Activated CD4-positive, alpha-beta memory T cell treated with anti-CD3 and anti-CD28 coated beads, Interleukin-2, amount 10 ng/mL, durations not matched to agents 7 days and 5 days (primary cell): ENCODE measurements at regions of chr2 and their contacts with region 1.

Region 1: GRCh38 chr2:203909261-203909967 is 27.1 kb upstream of the ICOS start:
- DNase-seq: no peak
- H3K4me3 Mint-ChIP-seq: peak overlapping the region; percentile 38
- H3K27ac Mint-ChIP-seq: peak overlapping the region; percentile 69
- H3K4me1 Mint-ChIP-seq: peaks cover 33% of the 10 kb centered on the region
- H3K27me3 Mint-ChIP-seq: peaks cover 3% of the 10 kb centered on the region

Region 2: DNA sequence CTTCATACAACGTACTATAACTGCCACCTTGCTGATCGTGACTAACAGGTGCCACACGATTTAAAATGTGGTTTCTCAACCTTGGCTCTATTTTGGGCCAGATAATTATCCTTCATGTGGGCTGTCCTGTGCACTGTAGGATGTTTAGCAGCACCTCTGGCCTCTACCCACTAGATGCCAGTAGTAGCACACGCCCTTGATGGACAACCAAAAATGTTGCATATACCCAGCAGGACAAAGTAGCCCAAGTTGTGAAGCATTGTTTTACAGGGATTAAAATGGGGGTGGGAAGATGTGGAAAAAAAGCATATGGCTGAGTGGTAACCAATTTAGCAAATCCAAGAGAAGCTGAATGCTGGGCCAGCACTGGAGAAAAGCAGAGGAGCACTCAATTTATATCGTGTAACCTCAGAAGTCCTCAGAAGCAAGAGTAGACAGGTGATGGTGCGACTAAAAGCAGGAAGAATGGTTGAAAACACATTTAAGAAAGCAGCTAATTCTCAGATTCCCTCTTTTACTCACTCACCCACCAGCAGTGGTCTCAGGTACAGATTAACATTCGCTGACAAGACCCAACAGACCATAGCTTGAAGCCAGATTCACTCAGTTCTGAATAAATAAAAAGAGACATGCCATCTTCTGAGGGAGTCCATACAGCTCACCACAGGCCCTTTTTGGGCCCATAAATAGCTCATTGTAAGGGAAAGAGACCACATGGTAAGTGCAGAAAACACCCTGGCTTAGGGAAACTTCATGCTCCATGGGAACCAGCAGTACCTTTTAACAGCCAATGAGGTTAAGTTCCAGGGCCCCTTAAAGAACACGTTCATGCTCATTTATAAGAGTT is 424.9 kb before region 1 on chr2:
- CTCF ChIA-PET with region 1: interaction called, 16 read pairs
- POLR2A ChIA-PET with region 1: interaction called, 5 read pairs
- DNase-seq: peak; percentile 62
- H3K4me3 Mint-ChIP-seq: no peak overlapping the region
- H3K27ac Mint-ChIP-seq: no peak overlapping the region
- H3K4me1 Mint-ChIP-seq: peaks cover 6% of the 10 kb centered on the region
- H3K27me3 Mint-ChIP-seq: no peaks in the 10 kb centered on the region

Region 3: DNA sequence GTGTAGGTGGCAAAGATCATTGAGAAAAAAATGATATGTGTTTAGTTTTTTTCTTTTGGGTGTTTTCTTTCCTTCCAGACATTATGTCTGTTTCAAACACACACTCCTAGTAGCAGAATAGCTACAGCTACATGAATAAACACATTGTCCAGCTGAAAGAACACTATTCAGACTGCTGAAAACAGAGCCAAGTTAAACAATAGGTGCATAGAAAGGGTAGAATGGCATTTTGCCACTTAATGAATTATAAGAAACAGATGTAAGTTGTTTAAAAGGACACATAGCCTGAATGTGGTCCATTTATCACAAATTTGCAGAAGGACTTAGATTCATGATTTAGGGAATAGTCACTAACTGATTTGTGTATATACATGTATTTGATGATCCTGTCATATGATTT is 21.7 kb before region 1 on chr2:
- CTCF ChIA-PET with region 1: interaction called, 16 read pairs
- POLR2A ChIA-PET with region 1: interaction called, 593 read pairs
- DNase-seq: no peak
- H3K4me3 Mint-ChIP-seq: no peak overlapping the region
- H3K27ac Mint-ChIP-seq: peak overlapping the region; percentile 83
- H3K4me1 Mint-ChIP-seq: peaks cover 80% of the 10 kb centered on the region
- H3K27me3 Mint-ChIP-seq: no peaks in the 10 kb centered on the region

Region 4: DNA sequence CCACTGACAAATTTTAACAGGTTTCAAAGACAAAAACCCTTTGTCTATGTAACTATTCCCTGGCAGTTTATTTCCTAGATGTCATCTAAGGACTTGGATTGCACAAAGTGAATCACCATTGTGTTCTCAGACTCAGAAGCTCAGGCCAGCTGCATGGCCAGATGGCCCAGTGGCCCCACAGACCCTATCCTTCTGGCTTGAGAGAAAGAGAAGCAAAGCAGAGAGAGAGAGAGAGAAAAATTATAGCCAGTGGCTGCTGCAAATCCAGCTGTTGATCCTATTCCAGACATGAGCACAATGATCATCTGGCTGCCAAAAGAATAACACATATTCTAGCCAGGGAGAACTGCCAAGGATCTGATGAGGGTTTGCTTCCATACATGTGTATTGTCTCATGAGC is 16.0 kb before region 1 on chr2:
- CTCF ChIA-PET with region 1: interaction called, 14 read pairs
- POLR2A ChIA-PET with region 1: interaction called, 3 read pairs
- DNase-seq: no peak
- H3K4me3 Mint-ChIP-seq: no peak overlapping the region
- H3K27ac Mint-ChIP-seq: peak overlapping the region; percentile 72
- H3K4me1 Mint-ChIP-seq: peaks cover 86% of the 10 kb centered on the region
- H3K27me3 Mint-ChIP-seq: no peaks in the 10 kb centered on the region